ENCODE measurements at regions of chr5 and their contacts with region 1.

Region 1: DNA sequence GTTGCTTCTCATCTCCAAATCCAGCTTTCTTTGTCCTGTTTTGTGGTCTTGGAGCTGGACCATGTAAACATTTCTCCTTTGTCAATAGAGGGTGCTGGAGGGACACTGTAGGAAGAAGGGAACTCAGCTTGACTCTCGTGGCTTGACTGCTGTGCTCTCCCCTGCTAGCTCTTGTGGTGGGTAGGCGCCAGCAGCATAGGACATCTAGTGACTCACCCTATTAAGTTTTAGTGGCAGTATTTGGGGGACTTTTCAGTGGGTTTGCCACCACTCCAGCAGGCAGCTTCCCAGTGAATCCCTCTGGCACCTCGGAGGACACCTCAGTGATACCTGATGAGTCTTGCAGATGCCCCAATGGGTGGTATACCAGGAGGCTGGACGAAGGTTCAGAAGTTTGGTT is 97.8 kb downstream of the TSSK1B start:
- DNase-seq: peak; percentile 22
- H3K4me3 ChIP-seq: no peak overlapping the region
- H3K27ac ChIP-seq: no peak overlapping the region
- H3K4me1 ChIP-seq: peaks cover 0 to 7% of the 10 kb centered on the region in 2 experiments; a peak in 1 of 4 replicates
- H3K27me3 ChIP-seq: no peaks in the 10 kb centered on the region
- CTCF ChIP-seq: peak; percentile 34
- EP300 ChIP-seq: no peak
- RAD21 ChIP-seq: peak; percentile 84

Region 2: DNA sequence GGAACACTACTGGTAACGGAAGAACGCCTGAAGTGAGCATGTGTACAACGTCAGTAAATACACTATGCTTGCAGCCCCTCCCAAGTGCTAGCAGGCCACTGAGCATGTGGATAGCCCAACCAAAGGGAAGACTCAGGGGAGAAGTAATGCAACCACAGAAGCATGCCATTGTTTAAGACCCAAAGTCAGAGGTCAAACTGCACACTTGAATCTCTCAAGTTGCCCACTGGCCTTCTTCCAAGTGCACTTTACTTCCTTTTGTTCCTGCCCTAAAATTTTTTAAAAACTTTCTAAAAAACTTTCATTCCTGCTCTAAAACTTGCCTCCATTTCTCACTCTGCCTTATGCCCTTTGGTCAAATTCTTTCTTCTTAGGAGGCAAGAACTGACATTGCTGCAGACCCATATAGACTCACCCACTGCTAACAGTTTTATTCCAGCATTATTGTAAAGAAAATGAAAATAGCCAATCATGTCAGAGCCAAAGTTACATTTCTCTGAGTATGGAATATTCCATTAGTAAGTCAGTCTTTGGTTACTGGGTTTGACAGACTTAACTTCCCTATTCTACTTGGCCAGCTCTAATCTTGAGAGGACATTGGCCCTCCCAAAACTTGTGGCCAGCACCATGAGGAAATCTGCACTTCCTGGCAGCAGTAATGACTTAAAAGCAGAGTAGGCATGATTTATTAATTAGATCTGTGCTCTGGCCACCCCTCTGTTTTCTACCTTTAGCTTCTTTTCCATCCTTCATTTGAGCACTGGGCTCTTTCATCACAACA is 20.9 kb after region 1 on chr5:
- CTCF ChIA-PET with region 1: interaction called, 10 read pairs
- POLR2A ChIA-PET with region 1: no interaction called
- DNase-seq: no peak
- H3K4me3 ChIP-seq: no peak overlapping the region
- H3K27ac ChIP-seq: peak overlapping the region in 1 of 2 experiments; percentile 60; a peak in 2 of 4 replicates
- H3K4me1 ChIP-seq: peaks cover 0 to 17% of the 10 kb centered on the region in 2 experiments; a peak in 2 of 4 replicates
- H3K27me3 ChIP-seq: no peaks in the 10 kb centered on the region
- CTCF ChIP-seq: no peak
- EP300 ChIP-seq: no peak
- RAD21 ChIP-seq: no peak

Region 3: DNA sequence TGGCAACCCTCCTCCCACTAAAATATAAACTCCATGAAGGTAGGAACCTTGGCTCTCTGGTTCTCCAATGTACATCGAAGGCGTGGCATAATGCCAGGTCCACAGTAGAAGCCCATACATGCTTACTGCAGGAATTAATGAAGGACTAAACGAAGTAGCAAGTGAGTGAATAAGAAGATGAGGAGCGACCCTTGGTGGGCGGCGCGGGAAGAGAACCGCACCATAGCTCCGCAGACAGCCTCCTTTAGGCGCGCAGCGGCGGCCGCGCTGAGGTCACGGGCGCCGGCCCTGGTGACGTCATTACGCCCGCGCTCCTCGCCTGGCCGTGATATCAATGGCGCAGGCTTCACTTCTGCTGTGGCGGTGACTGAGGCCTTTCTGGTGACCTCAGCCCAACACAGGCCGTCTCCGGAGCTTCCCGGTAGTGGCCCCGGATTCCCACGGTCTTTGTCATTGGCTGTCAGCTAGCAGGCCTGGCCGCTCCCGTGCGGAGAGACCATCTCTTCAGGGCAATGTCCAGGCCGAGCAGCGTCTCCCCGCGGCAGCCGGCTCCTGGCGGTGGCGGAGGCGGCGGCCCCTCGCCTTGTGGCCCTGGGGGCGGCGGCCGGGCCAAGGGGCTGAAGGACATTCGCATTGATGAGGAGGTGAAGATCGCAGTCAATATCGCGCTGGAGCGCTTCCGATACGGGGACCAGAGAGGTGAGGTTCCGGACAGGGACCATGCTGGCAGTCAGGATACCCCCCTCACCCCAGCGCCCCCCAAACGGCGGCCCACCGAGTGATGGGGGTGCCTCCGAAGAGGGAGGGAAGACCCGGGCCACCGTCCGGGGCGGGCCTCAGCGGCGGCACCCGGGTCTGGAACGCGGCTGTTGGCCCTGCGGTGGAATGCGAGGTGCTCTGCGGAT is 176.7 kb after region 1 on chr5 and contains the start of gene YTHDC2:
- CTCF ChIA-PET with region 1: interaction called, 14 read pairs
- POLR2A ChIA-PET with region 1: no interaction called
- DNase-seq: peak; percentile 89
- H3K4me3 ChIP-seq: peak within 1 kb of the TSS; percentile 78 to 92
- H3K27ac ChIP-seq: peak within 1 kb of the TSS; percentile 83
- H3K4me1 ChIP-seq: peaks cover 0 to 6% of the 10 kb centered on the region in 2 experiments; a peak in 2 of 4 replicates
- H3K27me3 ChIP-seq: no peaks in the 10 kb centered on the region; the same call in 1 of the 2 replicates
- CTCF ChIP-seq: peak; percentile 51
- EP300 ChIP-seq: no peak
- RAD21 ChIP-seq: peak; percentile 71
- polyA plus RNA-seq, gene YTHDC2: 3.5 and 4.7 TPM in 2 replicates

Region 4: DNA sequence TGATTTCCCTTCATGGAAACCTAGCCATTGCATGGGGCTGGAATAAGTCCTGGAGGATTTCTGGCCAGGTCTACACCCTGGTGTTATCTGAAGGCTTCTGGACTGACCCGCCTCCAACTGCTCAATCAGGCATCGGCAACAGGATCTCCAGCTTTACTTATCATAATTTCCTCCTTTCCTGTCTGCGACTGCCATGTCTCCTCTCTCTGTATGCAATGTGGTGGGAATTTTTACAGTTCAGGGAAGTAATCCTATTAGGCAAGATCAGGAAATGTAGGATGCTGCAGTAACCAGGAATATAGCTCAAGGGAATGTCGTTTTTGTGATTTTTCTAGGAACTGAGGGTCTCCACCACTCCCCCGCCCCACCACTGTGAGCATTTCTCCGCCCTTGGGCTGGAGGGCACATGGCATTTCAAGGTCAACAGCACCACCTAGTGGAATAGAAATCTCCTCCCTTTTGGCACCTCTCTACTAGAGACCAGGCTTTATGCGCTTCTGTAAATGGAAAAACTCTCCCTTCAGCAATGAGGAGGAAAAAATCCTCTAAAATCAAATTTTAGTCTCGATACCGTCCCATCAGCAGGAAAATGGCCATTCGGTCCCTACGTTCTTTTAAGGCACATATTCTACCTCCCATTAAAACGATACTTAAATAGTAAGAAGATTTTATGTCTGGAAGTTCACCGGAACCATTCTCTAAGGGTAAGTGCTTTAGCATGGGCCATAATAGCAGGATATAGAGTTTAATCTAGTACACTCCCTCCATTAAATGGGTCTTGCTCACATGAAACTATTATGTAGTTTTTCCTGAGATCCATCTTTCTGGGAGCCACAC is 269.5 kb after region 1 on chr5:
- CTCF ChIA-PET with region 1: interaction called, 25 read pairs
- POLR2A ChIA-PET with region 1: no interaction called
- DNase-seq: peak; percentile 66
- H3K4me3 ChIP-seq: peak overlapping the region; percentile 22 to 46; a peak in 2 of 4 replicates
- H3K27ac ChIP-seq: peak overlapping the region in 1 of 2 experiments; percentile 47; a peak in 1 of 4 replicates
- H3K4me1 ChIP-seq: peaks cover 0 to 5% of the 10 kb centered on the region in 2 experiments; a peak in 1 of 4 replicates
- H3K27me3 ChIP-seq: no peaks in the 10 kb centered on the region
- CTCF ChIP-seq: peak; percentile 78
- EP300 ChIP-seq: no peak
- RAD21 ChIP-seq: peak; percentile 90

Measured in SK-N-SH (cell line).